ENCODE measurements at regions of chr11 and their contacts with region 1.

Region 1: GRCh38 chr11:36041988-36042611 is 98.2 kb downstream of the LDLRAD3 start:
- DNase-seq: no peak
- H3K4me3 ChIP-seq: no peak overlapping the region
- CTCF ChIP-seq: peak; percentile 59

Region 2: GRCh38 chr11:36056160-36056751 is 14.2 kb after region 1 on chr11:
- CTCF ChIA-PET with region 1: interaction called, 36 read pairs
- POLR2A ChIA-PET with region 1: no interaction called
- DNase-seq: no peak
- H3K4me3 ChIP-seq: no peak overlapping the region
- CTCF ChIP-seq: peak; percentile 56

Region 3: DNA sequence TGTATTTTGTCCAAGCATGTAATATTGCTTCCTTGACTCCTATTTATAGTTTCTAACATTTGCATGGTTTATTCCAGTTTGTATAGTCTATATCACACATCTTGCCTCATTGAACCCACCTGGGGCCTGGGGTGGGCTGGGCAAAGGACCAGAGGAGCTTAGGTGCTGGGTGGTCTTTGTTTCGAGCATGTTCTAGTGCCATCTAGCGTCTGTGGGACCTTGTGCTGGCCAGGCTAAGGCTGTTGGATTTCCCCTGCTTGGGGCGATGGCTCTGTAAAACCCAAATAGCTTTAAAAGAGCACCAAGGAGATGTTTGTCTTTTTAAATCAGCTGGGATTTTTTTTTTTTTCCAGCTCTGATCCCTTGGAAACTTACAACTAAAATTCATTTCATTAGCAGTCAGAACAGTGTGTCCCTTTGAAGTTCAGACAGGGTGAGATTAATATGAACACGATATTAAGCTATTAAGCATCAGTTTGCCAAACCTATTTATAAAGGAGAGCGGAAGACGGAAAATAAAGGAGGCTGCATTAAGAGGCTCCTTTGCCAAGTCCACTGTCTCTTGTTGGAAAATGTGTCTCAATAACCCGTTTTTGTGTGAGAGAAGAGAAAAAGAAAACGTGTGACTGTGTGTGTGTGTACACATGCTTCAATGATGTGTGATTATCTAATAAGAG is 89.8 kb after region 1 on chr11:
- CTCF ChIA-PET with region 1: interaction called, 47 read pairs
- POLR2A ChIA-PET with region 1: no interaction called
- DNase-seq: no peak
- H3K4me3 ChIP-seq: no peak overlapping the region
- CTCF ChIP-seq: peak; percentile 76

Region 4: GRCh38 chr11:36258730-36259360 is 216.7 kb after region 1 on chr11:
- CTCF ChIA-PET with region 1: interaction called, 77 read pairs
- POLR2A ChIA-PET with region 1: no interaction called
- DNase-seq: peak; percentile 36
- H3K4me3 ChIP-seq: no peak overlapping the region
- CTCF ChIP-seq: peak; percentile 76

Measured in AG04449 (cell line).